Activated CD4-positive, alpha-beta T cell treated with anti-CD3 and anti-CD28 coated beads, Interleukin-2, amount 10 ng/mL, durations not matched to agents 24 days and 14 days (primary cell): ENCODE measurements at regions of chr3 and their contacts with region 1.

Region 1: GRCh38 chr3:112676659-112677234 is 35.8 kb upstream of the CCDC80 start:
- DNase-seq: peak; percentile 96
- H3K4me3 Mint-ChIP-seq: peak overlapping the region; percentile 60
- H3K27ac Mint-ChIP-seq: peak overlapping the region; percentile 90
- H3K4me1 Mint-ChIP-seq: peaks cover 62% of the 10 kb centered on the region
- H3K27me3 Mint-ChIP-seq: peaks cover 2% of the 10 kb centered on the region

Region 2: GRCh38 chr3:112261742-112262141 is 415.0 kb before region 1 on chr3:
- intact Hi-C with region 1: no loop called
- DNase-seq: no peak
- H3K4me3 Mint-ChIP-seq: no peak overlapping the region
- H3K27ac Mint-ChIP-seq: no peak overlapping the region
- H3K4me1 Mint-ChIP-seq: no peaks in the 10 kb centered on the region
- H3K27me3 Mint-ChIP-seq: peaks cover 6% of the 10 kb centered on the region

Region 3: DNA sequence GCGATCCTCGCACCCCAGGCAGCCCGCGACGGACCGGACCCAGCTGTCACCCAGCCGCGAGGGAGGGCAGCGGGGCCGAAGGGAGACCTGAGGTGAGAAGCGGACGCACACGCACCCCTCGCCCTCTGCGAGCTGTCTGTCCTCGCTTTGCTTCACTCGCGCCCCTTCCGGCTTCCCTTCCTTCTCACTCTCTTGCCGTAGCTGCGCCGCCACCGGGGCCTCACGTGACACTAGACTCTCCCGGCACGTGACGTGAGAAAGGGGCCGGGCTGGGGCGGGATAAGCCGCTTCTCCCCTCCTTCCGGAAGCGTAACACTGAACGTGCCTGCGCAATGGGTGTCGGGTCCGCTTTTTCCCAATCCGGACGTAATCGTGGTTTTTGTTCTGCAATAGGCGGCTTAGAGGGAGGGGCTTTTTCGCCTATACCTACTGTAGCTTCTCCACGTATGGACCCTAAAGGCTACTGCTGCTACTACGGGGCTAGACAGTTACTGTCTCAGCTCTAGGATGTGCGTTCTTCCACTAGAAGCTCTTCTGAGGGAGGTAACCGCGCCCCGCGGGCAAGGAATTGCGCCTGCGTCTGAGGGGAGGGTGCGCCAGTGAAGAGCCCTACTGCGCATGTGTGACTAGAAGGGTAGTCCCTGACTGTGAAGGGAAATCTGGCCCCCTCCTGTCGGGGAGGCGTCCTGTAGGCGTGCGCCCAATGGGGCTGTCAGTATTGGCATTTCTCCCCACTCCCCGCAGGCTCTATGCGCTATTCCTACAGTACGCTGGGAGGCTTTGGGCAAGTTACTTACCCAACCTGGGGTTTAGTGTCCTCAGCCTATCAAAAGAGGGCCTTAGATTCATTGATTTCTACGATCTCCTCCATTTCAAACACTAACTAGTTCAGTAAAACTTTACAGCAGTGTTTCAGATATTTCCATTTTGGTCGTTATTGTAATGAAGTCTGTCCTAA is 114.7 kb before region 1 on chr3 and contains the starts of genes ATG3 and SLC35A5:
- intact Hi-C with region 1: loop called (anchors 1 kb)
- DNase-seq: peak; percentile 100
- H3K4me3 Mint-ChIP-seq: peak within 1 kb of the TSS; percentile 98
- H3K27ac Mint-ChIP-seq: peak within 1 kb of the TSS; percentile 99
- H3K4me1 Mint-ChIP-seq: peaks cover 24% of the 10 kb centered on the region
- H3K27me3 Mint-ChIP-seq: no peaks in the 10 kb centered on the region
- total RNA-seq, gene ATG3: 66.9 and 69.1 TPM in 2 replicates
- total RNA-seq, gene SLC35A5: 15.5 and 16.3 TPM in 2 replicates

Region 4: DNA sequence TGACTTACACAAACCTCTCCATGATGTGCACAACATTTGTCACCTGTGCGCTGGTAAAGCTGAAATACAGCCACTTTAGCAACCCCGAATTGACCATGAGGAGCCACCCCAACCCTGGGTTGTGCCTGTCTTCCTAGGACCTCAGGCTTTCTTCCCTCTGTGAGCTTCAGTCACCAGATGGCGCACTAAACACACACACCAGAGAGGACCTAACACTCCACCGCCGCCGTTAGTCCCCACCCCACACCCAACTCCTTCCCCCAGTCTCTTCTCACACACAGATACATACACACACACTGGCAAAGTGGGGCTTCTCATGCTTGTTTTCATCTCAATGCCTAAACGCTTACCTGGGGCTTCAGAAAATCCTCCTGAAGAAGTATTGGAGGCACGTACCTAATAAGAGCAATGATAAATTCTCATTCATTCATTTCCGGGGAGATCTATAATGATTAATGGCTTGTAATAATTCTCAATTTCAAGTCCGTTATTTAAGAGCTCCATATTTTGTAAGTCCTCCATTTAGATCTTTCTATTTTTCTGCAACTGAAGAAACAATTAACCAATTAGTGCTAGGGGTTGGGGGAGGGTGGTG is 33.7 kb before region 1 on chr3:
- intact Hi-C with region 1: loop called (anchors 2 kb)
- DNase-seq: peak; percentile 94
- H3K4me3 Mint-ChIP-seq: peak overlapping the region; percentile 78
- H3K27ac Mint-ChIP-seq: peak overlapping the region; percentile 34
- H3K4me1 Mint-ChIP-seq: peaks cover 21% of the 10 kb centered on the region
- H3K27me3 Mint-ChIP-seq: peaks cover 11% of the 10 kb centered on the region

Region 5: GRCh38 chr3:112858410-112859069 is 181.8 kb after region 1 on chr3:
- intact Hi-C with region 1: loop called (anchors 2 kb)
- DNase-seq: no peak
- H3K4me3 Mint-ChIP-seq: no peak overlapping the region
- H3K27ac Mint-ChIP-seq: peak overlapping the region; percentile 69
- H3K4me1 Mint-ChIP-seq: peaks cover 20% of the 10 kb centered on the region
- H3K27me3 Mint-ChIP-seq: no peaks in the 10 kb centered on the region

Region 6: DNA sequence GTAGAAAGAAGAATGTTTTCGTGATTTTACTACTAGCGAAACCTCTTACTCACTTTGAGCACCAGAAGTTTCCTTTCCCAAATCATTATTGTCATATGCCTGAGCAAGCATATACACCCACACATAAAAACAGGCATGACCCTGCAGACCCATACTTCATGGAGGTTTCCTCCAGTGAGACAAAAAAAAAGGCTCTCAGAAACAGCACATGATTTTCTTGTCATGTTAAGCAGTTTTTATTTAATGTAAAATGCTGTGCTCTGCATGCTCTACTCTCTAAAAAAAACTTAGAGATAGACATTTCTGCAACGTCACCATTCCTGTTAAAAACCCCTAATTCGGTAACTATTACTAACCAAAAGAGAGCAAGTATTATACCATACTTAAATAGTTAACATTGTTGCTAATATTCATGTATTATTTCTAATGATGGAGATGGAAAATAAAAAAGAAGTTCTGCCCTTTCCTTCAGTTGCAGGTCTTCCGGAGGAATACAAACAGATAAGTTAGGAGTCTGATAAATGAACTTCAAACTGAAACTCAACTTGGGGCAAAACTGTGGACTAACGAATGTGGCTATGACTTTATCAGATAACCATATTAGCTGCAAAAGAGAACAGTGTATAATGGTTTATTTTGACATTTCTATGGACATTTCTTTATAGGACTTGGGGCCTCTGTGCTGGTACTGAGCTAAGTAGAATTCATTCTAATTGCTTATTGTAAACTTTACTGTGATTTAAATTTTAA is 282.2 kb after region 1 on chr3:
- intact Hi-C with region 1: loop called (anchors 5 kb)
- DNase-seq: no peak
- H3K4me3 Mint-ChIP-seq: peak overlapping the region; percentile 61
- H3K27ac Mint-ChIP-seq: peak overlapping the region; percentile 50
- H3K4me1 Mint-ChIP-seq: peaks cover 15% of the 10 kb centered on the region
- H3K27me3 Mint-ChIP-seq: no peaks in the 10 kb centered on the region

Region 7: DNA sequence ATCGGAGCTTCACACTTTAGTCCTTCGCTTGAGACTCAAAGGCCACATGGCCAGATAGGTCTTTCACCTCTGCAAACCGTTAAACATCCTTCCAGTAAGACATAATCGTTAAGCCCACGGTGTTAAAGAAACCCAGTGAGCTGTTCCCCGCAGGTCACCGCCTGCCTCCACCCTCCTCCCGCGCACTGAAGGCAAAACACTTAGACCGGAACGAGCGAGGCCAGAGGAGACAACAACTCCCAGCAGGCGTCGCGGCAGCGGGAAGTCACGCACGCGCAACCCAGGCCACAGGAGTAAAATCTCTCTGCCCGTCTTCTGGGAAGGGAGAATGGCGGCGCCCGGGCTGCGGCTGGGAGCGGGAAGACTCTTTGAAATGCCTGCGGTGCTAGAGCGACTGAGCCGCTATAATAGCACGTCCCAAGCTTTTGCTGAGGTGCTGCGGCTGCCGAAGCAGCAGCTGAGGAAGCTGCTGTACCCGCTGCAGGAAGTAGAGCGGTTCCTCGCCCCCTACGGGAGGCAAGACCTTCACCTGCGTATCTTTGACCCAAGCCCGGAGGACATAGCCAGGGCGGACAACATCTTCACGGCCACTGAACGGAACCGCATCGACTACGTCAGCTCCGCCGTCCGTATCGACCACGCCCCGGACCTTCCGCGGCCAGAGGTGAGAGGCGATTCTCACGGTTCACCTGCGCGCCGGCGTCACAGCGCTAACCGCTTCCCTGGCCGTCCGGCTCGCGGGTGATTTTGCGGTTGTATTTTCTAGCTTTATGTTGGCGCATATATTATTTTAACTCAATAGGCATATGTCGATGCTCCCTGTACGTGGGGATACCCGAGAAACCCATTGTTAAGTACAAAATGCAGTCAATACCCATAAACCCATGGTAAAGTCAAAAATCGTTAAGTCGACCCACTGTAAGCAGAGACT is 314.2 kb after region 1 on chr3 and contains the start of gene GTPBP8:
- intact Hi-C with region 1: loop called (anchors 5 kb)
- DNase-seq: peak; percentile 95
- H3K4me3 Mint-ChIP-seq: peak within 1 kb of the TSS; percentile 88
- H3K27ac Mint-ChIP-seq: peak within 1 kb of the TSS; percentile 97
- H3K4me1 Mint-ChIP-seq: peaks cover 56% of the 10 kb centered on the region
- H3K27me3 Mint-ChIP-seq: no peaks in the 10 kb centered on the region
- total RNA-seq, gene GTPBP8: 18.4 and 18.9 TPM in 2 replicates

Region 8: DNA sequence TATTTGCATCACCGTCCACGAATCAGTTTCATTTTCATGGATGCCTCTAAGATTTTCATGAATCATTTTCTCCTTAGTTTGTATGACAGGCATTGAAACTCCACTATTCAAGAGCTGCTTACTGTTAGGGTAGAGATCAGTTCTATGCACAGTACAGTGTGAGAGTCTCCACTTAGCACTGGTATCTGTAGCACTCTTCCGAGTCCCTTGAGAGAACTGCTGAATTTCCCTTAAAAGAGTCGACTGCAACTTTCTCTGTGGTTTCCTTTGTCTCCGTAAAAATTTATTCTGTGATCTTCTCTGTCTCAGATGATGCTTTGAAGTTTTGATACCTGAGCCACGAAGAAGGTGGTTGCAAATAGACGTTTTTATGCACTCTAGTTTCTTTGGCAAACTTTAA is 328.9 kb after region 1 on chr3:
- intact Hi-C with region 1: loop called (anchors 1 kb)
- DNase-seq: peak; percentile 77
- H3K4me3 Mint-ChIP-seq: peak overlapping the region; percentile 77
- H3K27ac Mint-ChIP-seq: peak overlapping the region; percentile 88
- H3K4me1 Mint-ChIP-seq: peaks cover 56% of the 10 kb centered on the region
- H3K27me3 Mint-ChIP-seq: no peaks in the 10 kb centered on the region